Gastrocnemius medialis (tissue), 4 donors: ENCODE measurements at regions of chr4 and their contacts with region 1.

Region 1: DNA sequence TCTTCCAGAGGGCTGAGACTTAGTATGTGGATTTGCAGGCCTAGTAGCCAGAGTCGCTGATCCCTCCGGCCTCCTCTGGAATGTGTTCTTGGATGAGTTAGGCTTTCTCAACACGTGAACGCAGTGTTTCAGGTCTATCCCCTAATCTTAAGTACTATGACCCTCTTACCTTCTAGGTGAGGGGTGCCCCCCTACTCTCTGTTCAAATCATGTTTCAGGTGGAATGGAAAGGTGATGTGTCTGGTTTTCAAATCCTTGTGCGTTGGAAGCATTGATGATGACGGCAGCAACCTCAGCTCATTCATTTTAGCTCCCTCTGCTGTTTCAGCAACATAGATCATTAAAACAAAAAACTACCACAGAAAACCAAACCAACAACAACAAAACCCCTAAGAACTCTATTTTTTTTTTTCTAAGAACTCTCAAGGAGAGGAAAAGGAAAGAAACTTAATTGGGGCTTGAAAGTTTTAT is 56.4 kb downstream of the RWDD4 start:
- DNase-seq: no peak
- ATAC-seq: peak in 1 of 2 donors; percentile 46
- H3K4me3 ChIP-seq: no peak overlapping the region
- H3K27ac ChIP-seq: peak overlapping the region in 3 of 4 donors; percentile 7 to 28 (median 24)
- H3K4me1 ChIP-seq: peaks cover 0 to 5% of the 10 kb centered on the region in 2 donors
- H3K27me3 ChIP-seq: no peaks in the 10 kb centered on the region
- CTCF ChIP-seq: peak; percentile 35 to 51 (median 42)
- POLR2A ChIP-seq: no peak

Region 2: GRCh38 chr4:183492791-183493221 is 109.8 kb before region 1 on chr4:
- in situ Hi-C with region 1: loop called in 1 of 4 experiments (anchors 10 kb)
- intact Hi-C with region 1: no loop called
- DNase-seq: no peak
- ATAC-seq: no peak
- H3K4me3 ChIP-seq: no peak overlapping the region
- H3K27ac ChIP-seq: no peak overlapping the region
- H3K4me1 ChIP-seq: no peaks in the 10 kb centered on the region
- H3K27me3 ChIP-seq: no peaks in the 10 kb centered on the region
- CTCF ChIP-seq: no peak
- POLR2A ChIP-seq: no peak

Region 3: DNA sequence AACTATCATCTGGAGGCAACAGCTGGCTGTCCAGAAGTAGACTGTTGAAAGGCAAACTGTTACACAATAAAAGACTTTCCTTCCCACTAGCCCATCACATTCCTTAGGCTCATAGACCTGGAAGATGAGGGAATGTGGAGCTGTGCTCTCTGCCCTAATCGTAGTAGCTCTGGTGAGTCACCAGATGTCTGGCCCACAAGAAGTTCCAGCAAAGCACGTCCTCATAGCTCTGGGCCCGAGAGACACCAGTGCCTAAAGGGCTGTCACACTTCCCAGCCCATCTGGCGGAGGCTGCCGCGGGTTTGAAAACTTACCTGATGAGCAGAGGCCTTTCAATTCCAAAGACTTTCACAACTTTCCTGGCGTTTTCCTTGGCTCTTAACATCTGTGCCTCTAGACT is 220.8 kb after region 1 on chr4:
- in situ Hi-C with region 1: no loop called
- intact Hi-C with region 1: no loop called
- DNase-seq: peak; percentile 10 to 59
- ATAC-seq: peak; percentile 70 to 75
- H3K4me3 ChIP-seq: no peak overlapping the region
- H3K27ac ChIP-seq: no peak overlapping the region
- H3K4me1 ChIP-seq: no peaks in the 10 kb centered on the region
- H3K27me3 ChIP-seq: no peaks in the 10 kb centered on the region
- CTCF ChIP-seq: no peak
- POLR2A ChIP-seq: no peak